IMR-90 (cell line): ENCODE measurements at regions of chr5 and their contacts with region 1.

Region 1: GRCh38 chr5:135993880-135994636 is 34.7 kb upstream of the TGFBI start:
- DNase-seq: peak; percentile 96
- ATAC-seq: peak; percentile 70
- H3K4me3 ChIP-seq: no peak overlapping the region
- H3K27ac ChIP-seq: peak overlapping the region; percentile 95
- H3K4me1 ChIP-seq: peaks cover 30% of the 10 kb centered on the region
- H3K27me3 ChIP-seq: no peaks in the 10 kb centered on the region
- CTCF ChIP-seq: no peak
- POLR2A ChIP-seq: peak; percentile 72
- RAD21 ChIP-seq: peak; percentile 16; the same call in 1 of the 2 replicates

Region 2: GRCh38 chr5:135729321-135729786 is 264.7 kb before region 1 on chr5:
- CTCF ChIA-PET with region 1: no interaction called
- POLR2A ChIA-PET with region 1: no interaction called
- dilution Hi-C with region 1: no loop called
- in situ Hi-C with region 1: no loop called
- intact Hi-C with region 1: no loop called
- DNase-seq: no peak
- ATAC-seq: no peak
- H3K4me3 ChIP-seq: no peak overlapping the region
- H3K27ac ChIP-seq: no peak overlapping the region
- H3K4me1 ChIP-seq: no peaks in the 10 kb centered on the region
- H3K27me3 ChIP-seq: peaks cover 2% of the 10 kb centered on the region; the same call in 1 of the 2 replicates
- CTCF ChIP-seq: 0 out of 2 replicates have a peak, but pooled peaks have one; percentile 5
- POLR2A ChIP-seq: no peak
- RAD21 ChIP-seq: no peak

Region 3: GRCh38 chr5:135980620-135981019 is 13.4 kb before region 1 on chr5:
- CTCF ChIA-PET with region 1: no interaction called
- POLR2A ChIA-PET with region 1: no interaction called
- dilution Hi-C with region 1: no loop called
- in situ Hi-C with region 1: no loop called
- intact Hi-C with region 1: loop called (anchors 2 kb)
- DNase-seq: peak; percentile 41
- ATAC-seq: peak; percentile 37; the same call in 1 of the 2 replicates
- H3K4me3 ChIP-seq: no peak overlapping the region
- H3K27ac ChIP-seq: no peak overlapping the region
- H3K4me1 ChIP-seq: peaks cover 8% of the 10 kb centered on the region
- H3K27me3 ChIP-seq: no peaks in the 10 kb centered on the region
- CTCF ChIP-seq: no peak
- POLR2A ChIP-seq: no peak
- RAD21 ChIP-seq: no peak

Region 4: GRCh38 chr5:136020383-136021015 is 26.4 kb after region 1 on chr5:
- CTCF ChIA-PET with region 1: interaction called, 6 read pairs
- POLR2A ChIA-PET with region 1: no interaction called
- dilution Hi-C with region 1: no loop called
- in situ Hi-C with region 1: no loop called
- intact Hi-C with region 1: loop called (anchors 2 kb)
- DNase-seq: peak; percentile 99
- ATAC-seq: peak; percentile 66
- H3K4me3 ChIP-seq: no peak overlapping the region
- H3K27ac ChIP-seq: peak overlapping the region; percentile 97; the same call in 1 of the 2 replicates
- H3K4me1 ChIP-seq: peaks cover 51% of the 10 kb centered on the region
- H3K27me3 ChIP-seq: no peaks in the 10 kb centered on the region
- CTCF ChIP-seq: no peak
- POLR2A ChIP-seq: 0 out of 2 replicates have a peak, but pooled peaks have one; percentile 58
- RAD21 ChIP-seq: no peak